H1 (cell line): ENCODE measurements at regions of chr2 and their contacts with region 1.

Region 1: GRCh38 chr2:96145036-96145847 is at the start of gene DUSP2:
- DNase-seq: peak in 1 of 2 experiments; percentile 81
- H3K4me3 ChIP-seq: peak within 1 kb of the TSS; percentile 38 to 69 (median 41)
- H3K27ac ChIP-seq: no peak within 1 kb of the TSS
- H3K4me1 ChIP-seq: peaks cover 0 to 42% (median 30%) of the 10 kb centered on the region in 4 experiments; a peak in 6 of 7 replicates
- H3K27me3 ChIP-seq: peaks cover 4 to 30% (median 20%) of the 10 kb centered on the region in 4 experiments; a peak in 6 of 7 replicates
- CTCF ChIP-seq: peak in 1 of 3 experiments; percentile 1; a peak in 1 of 4 replicates
- EP300 ChIP-seq: no peak
- POLR2A ChIP-seq: peak in 1 of 2 experiments; percentile 73; a peak in 2 of 3 replicates
- RAD21 ChIP-seq: no peak
- total RNA-seq, gene DUSP2: 8.7 and 10.1 TPM in 2 replicates

Region 2: DNA sequence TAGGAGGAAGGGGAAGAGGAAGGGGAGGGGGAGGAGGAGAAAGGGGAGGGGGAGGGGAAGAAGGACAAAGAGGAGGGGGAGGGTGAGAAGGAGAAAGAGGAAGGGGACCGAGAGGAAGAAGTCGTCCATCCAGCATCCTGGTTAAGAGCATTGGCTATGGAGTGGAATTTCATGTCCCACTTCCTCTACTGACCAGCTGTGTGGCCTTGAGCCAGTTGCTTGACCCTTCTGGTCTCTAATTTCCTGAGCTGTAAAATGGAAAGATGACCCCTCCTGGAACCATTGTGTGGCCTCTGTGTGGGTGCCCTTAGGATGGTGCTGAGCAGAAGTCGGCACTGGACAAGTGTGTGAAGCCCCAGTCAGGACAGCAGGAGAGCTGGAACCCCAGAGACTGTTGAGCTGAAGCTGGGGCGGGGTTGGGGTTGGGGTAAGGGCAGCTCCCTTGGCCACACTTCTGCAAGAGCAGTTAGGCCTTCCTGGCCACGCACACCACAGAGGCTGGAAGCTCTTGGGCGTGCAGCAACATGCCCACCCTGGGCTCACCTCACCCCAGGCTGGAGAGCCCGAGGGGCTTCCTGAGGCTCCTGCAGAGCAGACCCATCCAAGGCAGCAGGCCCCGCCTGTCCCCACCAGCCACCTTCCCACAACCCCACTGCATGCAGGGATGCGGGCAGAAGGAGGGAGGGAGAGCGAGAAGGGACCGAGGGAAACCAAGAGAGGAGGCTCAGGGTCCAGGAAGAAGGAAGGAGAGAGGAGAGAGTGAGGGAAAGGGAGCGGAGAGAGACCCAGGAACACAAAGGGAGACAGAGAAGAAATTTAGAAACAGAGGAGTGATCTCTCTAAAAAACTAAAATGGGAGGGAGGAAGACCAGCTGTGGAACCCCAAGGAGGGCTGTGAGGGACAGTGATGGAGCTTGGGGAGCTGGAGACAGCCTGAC is 45.1 kb before region 1 on chr2:
- CTCF ChIA-PET with region 1: interaction called, 10 read pairs
- POLR2A ChIA-PET with region 1: interaction called, 4 read pairs
- DNase-seq: peak in 1 of 2 experiments; percentile 50
- H3K4me3 ChIP-seq: no peak overlapping the region
- H3K27ac ChIP-seq: no peak overlapping the region
- H3K4me1 ChIP-seq: peaks cover 0 to 9% (median 3%) of the 10 kb centered on the region in 4 experiments; a peak in 4 of 7 replicates
- H3K27me3 ChIP-seq: no peaks in the 10 kb centered on the region
- CTCF ChIP-seq: no peak
- EP300 ChIP-seq: no peak
- POLR2A ChIP-seq: no peak
- RAD21 ChIP-seq: no peak

Region 3: DNA sequence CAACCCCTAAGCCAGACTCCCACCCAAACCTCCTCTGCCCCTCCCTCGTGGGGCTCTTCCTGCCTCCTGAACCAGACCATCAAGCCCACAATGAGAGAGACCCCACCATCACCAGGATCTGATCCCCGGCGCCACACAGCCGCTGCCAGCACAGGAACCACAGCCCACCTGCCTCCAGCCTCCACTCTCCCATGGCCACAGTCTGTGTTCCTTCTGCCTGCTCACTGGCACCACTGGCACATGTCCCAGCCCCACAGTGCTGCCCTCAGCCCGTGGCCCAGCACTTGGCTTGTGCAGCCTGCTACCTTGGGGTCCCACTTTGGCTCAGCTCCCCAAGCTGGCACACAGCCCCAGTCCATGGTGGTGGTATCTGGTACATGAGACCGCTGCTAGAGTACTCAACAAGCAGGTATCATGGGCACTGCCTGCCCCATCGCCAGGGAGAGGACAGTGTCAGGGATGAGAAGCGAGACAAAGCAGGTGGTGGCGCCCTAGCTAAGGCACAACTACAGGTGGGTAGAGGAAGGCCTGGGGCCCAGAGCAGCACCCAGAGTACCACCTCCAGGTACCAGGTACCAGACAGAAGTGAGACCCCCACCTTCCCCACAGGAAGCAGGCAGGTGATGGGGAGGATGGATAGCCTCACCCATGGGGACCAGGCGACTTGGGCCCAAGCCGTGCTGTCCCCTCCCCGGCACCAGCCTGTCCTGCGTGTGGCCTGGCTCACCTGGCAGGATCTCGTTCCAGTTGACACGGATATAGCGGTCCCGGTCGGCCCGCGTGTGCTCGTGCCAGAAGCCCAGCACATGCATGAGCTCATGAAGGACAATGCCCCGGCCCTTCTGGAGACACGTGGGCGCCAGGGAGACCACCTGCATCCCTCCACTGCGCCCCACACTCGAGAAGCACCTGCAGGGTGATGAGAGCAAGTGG is 13.2 kb before region 1 on chr2:
- CTCF ChIA-PET with region 1: interaction called, 98 read pairs
- POLR2A ChIA-PET with region 1: interaction called, 3 read pairs
- DNase-seq: no peak
- H3K4me3 ChIP-seq: no peak overlapping the region
- H3K27ac ChIP-seq: no peak overlapping the region
- H3K4me1 ChIP-seq: no peaks in the 10 kb centered on the region
- H3K27me3 ChIP-seq: no peaks in the 10 kb centered on the region; a peak in 1 of 7 replicates
- CTCF ChIP-seq: no peak
- EP300 ChIP-seq: no peak
- POLR2A ChIP-seq: no peak
- RAD21 ChIP-seq: no peak

Region 4: DNA sequence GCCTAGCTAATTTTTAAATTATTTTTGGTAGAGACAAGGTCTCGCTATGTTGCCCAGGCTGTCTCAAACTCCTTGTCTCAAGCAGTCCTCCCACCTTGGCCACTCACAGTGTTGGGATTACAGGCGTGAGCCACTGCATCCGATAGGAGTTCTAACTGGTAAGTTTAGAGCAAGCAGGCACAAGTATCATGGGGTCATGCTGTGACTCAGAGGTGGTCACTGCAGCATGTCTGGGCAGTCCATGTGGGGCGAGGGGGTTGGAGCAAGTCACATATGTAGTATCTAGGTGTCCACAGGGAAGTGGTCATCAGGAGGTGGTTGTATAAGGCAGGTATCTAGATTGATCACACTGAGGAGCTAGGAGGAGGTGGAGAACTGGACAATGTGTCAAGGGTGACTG is 86.1 kb after region 1 on chr2:
- CTCF ChIA-PET with region 1: no interaction called
- POLR2A ChIA-PET with region 1: no interaction called
- DNase-seq: no peak
- H3K4me3 ChIP-seq: no peak overlapping the region
- H3K27ac ChIP-seq: no peak overlapping the region
- H3K4me1 ChIP-seq: no peaks in the 10 kb centered on the region
- H3K27me3 ChIP-seq: no peaks in the 10 kb centered on the region
- CTCF ChIP-seq: no peak
- EP300 ChIP-seq: no peak
- POLR2A ChIP-seq: no peak
- RAD21 ChIP-seq: no peak

Region 5: DNA sequence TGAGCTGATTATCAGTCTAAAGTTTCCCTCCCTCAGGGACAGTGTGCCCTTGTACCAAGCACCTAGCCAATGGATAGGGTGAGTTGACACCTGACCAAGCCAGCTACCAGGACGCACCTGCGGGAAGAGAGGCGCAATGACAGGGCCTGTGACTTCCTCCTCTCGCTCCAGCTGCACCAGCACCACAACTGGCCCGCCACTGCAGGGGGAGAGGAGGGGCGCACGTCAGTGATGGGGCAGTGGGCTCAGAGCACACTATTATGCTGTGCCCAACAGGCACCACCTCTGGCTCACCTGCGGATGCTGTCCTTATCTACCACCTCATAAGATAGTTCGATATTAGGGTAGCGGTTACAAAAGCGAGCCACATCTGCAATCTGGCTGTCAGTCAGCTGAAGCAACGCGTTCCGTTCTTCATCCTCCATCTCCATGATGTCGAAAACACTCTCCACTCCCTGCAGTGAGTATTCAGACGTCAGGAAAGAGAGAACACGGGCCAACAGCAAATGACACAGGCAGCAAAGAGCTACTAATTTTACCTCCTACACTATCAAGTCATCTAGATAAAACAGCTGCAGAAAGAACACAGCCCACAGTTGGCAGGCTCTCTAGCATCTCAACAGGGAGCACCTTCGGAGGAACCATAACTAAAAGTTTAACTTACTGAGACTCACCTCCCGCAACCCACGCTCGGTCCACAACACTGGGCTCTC is 131.7 kb after region 1 on chr2:
- CTCF ChIA-PET with region 1: no interaction called
- POLR2A ChIA-PET with region 1: no interaction called
- DNase-seq: no peak
- H3K4me3 ChIP-seq: no peak overlapping the region
- H3K27ac ChIP-seq: no peak overlapping the region
- H3K4me1 ChIP-seq: no peaks in the 10 kb centered on the region
- H3K27me3 ChIP-seq: no peaks in the 10 kb centered on the region; a peak in 1 of 7 replicates
- CTCF ChIP-seq: no peak
- EP300 ChIP-seq: no peak
- POLR2A ChIP-seq: no peak
- RAD21 ChIP-seq: no peak

Region 6: GRCh38 chr2:96656540-96656939 is 511.3 kb after region 1 on chr2:
- CTCF ChIA-PET with region 1: no interaction called
- POLR2A ChIA-PET with region 1: no interaction called
- DNase-seq: no peak
- H3K4me3 ChIP-seq: no peak overlapping the region
- H3K27ac ChIP-seq: no peak overlapping the region
- H3K4me1 ChIP-seq: no peaks in the 10 kb centered on the region
- H3K27me3 ChIP-seq: no peaks in the 10 kb centered on the region
- CTCF ChIP-seq: no peak
- EP300 ChIP-seq: no peak
- POLR2A ChIP-seq: no peak
- RAD21 ChIP-seq: no peak